AG04450 (cell line): ENCODE measurements at regions of chr1 and their contacts with region 1.

Region 1: DNA sequence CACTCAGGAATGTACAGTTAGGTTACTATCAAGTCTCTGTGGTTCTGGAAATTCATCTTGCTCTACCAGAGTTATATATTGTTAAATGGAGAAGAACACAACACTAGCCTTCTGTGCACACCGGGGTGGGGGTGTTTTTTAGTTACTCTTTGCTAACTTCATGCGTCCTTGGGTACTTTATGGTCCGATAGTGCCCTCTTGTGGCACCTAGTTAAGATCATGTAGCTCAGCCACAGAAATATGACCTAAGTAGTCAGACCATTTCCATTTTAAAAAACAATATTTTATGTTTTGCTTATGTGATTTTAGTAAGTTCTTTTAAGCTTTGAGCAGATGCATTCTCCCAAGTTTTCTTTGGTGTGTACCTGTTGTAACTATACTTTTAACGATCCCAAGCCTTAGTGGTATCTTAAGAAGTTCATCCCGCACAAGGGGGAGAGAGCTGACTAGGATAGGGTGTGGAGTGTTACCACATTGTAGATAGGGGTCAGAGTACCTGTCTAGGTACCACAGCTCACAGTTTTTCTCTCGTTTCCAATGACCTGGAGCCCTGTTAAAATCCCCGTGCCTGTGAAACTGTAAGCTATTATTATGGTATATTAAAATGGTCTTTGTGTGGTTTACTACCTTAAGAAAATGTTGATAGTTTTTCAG is 20.6 kb upstream of the SH3D21 start:
- DNase-seq: peak; percentile 81
- H3K4me3 ChIP-seq: no peak overlapping the region
- H3K27ac ChIP-seq: no peak overlapping the region
- H3K27me3 ChIP-seq: no peaks in the 10 kb centered on the region
- CTCF ChIP-seq: peak; percentile 74

Region 2: GRCh38 chr1:36034692-36035091 is 250.9 kb before region 1 on chr1:
- CTCF ChIA-PET with region 1: no interaction called
- POLR2A ChIA-PET with region 1: no interaction called
- DNase-seq: no peak
- H3K4me3 ChIP-seq: no peak overlapping the region
- H3K27ac ChIP-seq: no peak overlapping the region
- H3K27me3 ChIP-seq: no peaks in the 10 kb centered on the region
- CTCF ChIP-seq: no peak

Region 3: GRCh38 chr1:36134505-36135329 is 150.9 kb before region 1 on chr1:
- CTCF ChIA-PET with region 1: interaction called, 34 read pairs
- POLR2A ChIA-PET with region 1: no interaction called
- DNase-seq: no peak
- H3K4me3 ChIP-seq: no peak overlapping the region
- H3K27ac ChIP-seq: peak overlapping the region; percentile 47
- H3K27me3 ChIP-seq: no peaks in the 10 kb centered on the region
- CTCF ChIP-seq: peak; percentile 68

Region 4: DNA sequence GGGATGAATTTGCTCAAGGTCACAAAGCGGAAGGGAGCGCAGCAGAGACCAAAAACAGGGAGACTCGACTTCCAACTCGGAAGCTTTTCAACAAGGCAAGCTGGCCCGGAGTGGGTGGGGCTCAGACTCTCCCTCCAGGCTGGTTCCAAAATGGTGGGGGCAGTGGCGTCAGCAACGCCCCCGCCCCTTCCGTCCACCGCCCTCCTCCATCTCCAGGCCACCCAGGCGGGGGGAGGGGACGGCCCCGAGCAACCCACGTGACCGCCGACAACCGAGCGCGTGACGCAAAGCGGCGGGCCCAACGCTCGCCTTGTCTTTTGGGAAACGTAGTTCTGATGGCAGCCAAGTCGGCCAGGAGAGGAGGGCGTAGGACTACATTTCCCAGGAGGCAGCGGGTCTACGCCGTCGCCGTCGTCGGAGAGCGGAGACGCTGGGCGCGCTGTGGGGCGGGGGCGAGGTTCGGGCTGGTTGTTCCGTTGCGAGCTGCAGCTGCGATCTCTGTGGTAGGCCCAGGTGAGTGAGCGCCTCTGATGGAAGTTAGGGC is 61.5 kb before region 1 on chr1 and contains the start of gene THRAP3:
- CTCF ChIA-PET with region 1: interaction called, 15 read pairs
- POLR2A ChIA-PET with region 1: interaction called, 3 read pairs
- DNase-seq: peak; percentile 98
- H3K4me3 ChIP-seq: peak within 1 kb of the TSS; percentile 97
- H3K27ac ChIP-seq: peak within 1 kb of the TSS; percentile 94
- H3K27me3 ChIP-seq: no peaks in the 10 kb centered on the region
- CTCF ChIP-seq: no peak
- polyA plus RNA-seq, gene THRAP3: 76.0 and 76.5 TPM in 2 replicates

Region 5: DNA sequence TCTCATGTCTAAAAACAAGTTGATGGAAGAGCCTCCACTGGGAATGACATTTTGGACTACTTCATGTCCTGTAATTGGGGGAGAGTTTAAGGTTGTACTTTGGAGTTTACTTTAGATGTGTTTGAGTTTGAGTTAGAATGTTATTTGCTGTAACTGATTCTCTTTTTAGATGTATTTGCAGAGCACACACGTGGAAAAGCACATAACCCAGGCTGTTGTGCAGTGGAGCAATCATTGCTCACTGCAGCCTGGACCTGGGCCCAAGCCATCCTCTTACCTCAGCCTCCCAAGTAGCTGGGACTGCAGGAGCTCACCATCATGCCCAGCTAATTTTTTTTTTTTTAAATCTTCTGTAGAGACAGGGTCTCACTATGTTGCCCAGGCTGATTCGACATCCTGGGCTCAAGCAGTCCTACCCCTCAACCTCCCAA is 16.2 kb before region 1 on chr1:
- CTCF ChIA-PET with region 1: interaction called, 16 read pairs
- POLR2A ChIA-PET with region 1: interaction called, 4 read pairs
- DNase-seq: no peak
- H3K4me3 ChIP-seq: no peak overlapping the region
- H3K27ac ChIP-seq: no peak overlapping the region
- H3K27me3 ChIP-seq: no peaks in the 10 kb centered on the region
- CTCF ChIP-seq: no peak

Region 6: DNA sequence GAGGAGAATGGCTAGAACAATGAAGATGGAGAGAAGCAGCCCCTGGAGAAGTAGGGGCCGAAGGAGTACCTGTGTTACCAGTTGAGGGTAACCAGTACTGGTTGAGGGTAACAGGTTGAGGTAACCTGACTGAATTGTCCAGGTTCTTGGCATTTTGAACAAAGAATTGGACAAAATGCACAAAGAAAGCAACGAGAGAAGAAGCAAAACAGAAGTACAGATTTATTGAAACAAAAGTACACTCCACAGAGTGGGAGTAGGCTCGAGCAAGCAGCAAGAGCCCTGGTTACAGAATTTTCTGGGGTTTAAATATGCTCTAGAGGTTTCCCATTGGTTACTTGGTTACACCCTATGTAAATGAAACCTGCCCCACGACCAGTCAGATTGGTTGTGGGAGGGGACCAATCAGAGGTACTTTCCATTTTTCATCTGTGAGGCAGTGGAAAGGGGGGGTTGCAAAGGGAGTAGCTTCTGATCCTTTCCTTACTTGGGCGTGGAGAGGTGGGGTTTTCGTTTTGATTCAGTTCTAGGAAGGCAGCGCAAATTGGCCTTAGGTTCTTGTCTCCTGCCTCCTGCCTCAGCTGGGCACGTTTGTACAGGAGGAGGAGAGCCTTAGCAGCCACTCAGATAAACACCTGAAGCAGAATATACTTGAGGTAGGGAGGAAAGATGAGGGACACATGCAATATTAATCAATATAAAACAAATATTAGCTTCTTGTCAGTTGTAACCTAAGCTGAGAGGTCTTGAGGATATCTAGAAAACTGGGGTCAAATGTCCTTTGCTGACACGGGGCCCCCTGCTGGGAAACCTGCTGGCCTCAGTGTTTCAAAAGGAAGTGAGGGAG is 126.3 kb after region 1 on chr1:
- CTCF ChIA-PET with region 1: no interaction called
- POLR2A ChIA-PET with region 1: no interaction called
- DNase-seq: no peak
- H3K4me3 ChIP-seq: no peak overlapping the region
- H3K27ac ChIP-seq: no peak overlapping the region
- H3K27me3 ChIP-seq: no peaks in the 10 kb centered on the region
- CTCF ChIP-seq: no peak

Region 7: DNA sequence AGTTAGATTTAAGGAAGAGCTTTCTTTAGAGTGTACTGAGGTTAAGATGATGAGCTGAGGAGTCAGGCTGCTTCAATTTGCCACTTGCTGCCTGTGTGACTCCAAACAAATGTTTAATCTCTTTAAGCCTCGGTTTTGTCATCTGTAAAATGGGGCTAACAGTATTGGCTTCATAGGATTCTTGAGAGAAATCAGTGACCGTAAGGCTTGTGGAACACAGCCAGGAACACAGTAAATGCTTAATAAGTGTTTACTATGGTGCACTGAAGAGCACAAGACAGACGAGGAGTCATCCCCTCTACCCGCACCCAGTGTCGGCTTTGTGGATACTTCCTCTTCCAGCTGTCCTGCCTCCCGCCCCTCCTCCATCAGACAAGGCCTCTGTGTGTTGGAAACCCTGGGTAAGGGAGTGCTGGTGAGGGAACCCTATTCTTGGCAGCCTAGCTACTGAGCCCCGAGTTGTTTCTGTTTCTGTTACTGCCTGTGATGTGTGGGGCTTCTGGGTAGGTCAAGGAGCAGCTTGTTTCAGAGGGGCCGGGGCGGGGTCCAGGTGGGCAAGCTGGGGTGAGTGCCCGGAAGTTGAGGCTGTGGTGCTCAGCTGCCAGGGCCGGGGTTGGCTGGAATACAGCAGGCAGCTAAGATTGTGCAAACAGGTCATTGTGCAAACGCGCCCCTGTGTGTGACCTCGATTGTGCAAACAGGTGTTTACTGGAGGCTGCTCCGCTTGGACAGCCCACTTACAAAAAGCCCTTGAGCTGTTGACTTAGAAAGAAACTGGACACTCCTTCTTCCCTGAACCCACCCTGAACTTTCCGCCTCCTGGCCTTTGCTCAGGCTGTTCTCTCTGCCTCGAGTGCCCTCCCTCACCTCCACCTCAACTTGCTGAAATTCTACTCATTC is 201.1 kb after region 1 on chr1:
- CTCF ChIA-PET with region 1: no interaction called
- POLR2A ChIA-PET with region 1: no interaction called
- DNase-seq: no peak
- H3K4me3 ChIP-seq: no peak overlapping the region
- H3K27ac ChIP-seq: no peak overlapping the region
- H3K27me3 ChIP-seq: peaks cover 25% of the 10 kb centered on the region
- CTCF ChIP-seq: no peak